GM10248 (cell line): ENCODE measurements at regions of chr3 and their contacts with region 1.

Region 1: DNA sequence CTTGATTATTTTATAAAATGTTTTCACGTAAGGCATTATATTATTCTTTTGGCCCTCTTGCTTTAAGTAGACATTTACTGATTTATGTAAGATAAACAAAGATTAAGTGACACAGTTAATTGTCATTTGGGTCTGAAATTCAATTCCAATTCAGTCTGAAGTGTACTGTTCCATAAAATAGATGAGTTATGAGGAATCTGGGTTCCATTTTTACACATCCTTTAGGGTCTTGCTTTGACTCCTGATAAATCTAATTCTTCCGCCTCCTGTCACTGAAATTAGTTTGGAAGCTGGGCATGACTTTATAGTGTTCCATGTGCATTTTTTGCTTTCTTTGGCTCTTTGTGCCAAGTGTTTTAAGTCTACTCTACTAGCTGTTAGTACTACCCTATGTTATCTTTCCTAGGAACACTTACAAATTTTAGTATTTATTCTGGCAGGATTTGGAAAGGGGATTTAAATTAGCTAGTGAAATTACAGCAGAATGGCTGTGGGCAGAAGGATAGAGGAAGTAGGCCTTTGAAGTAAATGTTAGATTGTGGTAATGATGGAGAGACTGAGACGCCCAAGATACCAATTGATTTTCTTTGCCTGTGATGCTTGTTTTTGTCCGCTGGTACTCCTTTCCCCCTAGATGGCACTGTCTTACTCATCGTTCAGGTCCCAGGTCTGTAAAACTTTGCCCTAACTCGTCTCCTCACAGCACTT is 14.3 kb downstream of the ARL8B start:
- DNase-seq: peak; percentile 63
- CTCF ChIP-seq: peak; percentile 57

Region 2: GRCh38 chr3:4588466-4588865 is 547.9 kb before region 1 on chr3:
- CTCF ChIA-PET with region 1: no interaction called
- POLR2A ChIA-PET with region 1: no interaction called
- DNase-seq: peak; percentile 23
- CTCF ChIP-seq: no peak

Region 3: DNA sequence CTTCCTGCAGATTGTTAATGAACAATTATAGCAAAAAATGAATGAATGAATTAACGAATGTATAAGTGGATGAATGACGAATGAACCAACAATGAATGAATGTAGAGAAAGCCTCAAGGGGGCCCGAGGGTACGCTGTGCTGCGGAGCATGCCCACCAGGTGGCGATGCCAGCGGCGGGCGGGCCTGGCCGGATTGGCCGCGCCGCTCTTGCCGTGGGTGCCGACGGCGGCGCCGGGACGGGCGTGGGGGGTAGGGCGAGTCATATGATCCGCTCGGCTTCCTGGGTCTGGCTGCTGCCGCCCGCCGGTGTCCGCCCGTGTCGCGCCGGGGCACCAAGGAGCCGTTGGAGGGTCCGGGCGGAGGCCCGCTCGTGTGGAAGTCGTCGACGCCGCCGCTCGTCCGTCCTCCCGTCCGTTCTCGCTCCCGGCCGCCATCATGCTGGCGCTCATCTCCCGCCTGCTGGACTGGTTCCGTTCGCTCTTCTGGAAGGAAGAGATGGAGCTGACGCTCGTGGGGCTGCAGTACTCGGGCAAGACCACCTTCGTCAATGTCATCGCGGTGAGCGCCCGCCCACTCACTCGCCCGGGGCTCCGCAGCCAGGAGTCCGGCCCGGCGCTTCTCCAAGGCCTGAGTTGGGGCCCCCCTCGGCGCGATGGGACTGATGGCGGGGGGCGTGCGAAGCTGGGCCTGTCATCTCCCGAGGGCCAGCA is 14.2 kb before region 1 on chr3 and contains the start of gene ARL8B:
- CTCF ChIA-PET with region 1: interaction called, 81 read pairs
- POLR2A ChIA-PET with region 1: interaction called, 6 read pairs
- DNase-seq: peak; percentile 95
- CTCF ChIP-seq: peak; percentile 98

Region 4: DNA sequence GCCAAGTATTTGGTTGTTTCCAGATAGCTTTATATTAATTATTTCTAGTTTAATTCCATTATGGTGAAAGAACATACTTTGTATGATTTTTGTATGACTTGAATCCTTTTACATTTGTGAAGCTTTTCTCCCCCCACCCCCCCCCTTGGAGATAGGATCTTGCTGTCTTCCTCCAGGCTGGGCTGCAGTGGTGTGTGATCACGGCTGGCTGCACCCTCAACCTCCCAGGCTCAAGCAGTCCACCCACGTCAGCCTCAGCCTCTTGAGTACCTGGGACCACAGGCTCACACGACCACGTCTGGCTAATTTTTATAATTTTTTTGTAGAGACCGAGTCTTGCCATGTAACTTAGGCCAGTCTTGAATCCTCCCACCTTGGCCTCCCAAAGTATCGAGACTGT is 15.2 kb after region 1 on chr3:
- CTCF ChIA-PET with region 1: interaction called, 18 read pairs
- POLR2A ChIA-PET with region 1: no interaction called
- DNase-seq: no peak
- CTCF ChIP-seq: no peak

Region 5: DNA sequence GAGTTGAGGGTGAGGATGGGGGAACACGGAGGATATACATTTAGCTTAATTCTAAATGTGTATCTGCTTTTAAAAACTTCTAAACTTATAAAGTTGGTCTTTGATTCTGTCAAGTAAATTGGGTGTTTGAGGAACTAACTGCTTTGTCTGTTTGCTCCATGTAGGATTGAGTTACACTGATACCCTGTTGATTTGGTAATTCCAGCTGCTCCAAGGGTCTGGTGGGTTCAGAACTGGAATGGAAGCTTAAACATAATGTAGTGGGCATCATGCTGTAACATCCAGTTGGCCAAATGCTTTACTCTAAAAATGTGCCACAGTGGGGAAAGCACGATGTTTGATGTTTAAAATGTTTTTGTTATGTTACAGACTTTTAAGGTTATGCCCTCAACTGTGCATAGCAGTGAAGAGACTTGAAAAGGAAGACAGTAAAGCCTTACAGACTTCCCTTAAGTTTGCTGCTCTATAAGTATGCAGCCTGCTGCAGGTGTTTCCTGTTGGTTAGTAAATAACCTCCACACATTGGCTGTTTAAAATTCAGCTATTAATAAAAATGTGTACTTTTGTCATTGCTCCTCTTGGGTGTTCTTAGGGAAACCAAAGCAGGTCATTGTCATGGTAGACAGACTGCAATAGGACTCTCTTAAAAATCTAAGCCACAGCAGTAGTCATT is 45.2 kb after region 1 on chr3:
- CTCF ChIA-PET with region 1: interaction called, 30 read pairs
- POLR2A ChIA-PET with region 1: no interaction called
- DNase-seq: peak; percentile 40
- CTCF ChIP-seq: no peak

Region 6: DNA sequence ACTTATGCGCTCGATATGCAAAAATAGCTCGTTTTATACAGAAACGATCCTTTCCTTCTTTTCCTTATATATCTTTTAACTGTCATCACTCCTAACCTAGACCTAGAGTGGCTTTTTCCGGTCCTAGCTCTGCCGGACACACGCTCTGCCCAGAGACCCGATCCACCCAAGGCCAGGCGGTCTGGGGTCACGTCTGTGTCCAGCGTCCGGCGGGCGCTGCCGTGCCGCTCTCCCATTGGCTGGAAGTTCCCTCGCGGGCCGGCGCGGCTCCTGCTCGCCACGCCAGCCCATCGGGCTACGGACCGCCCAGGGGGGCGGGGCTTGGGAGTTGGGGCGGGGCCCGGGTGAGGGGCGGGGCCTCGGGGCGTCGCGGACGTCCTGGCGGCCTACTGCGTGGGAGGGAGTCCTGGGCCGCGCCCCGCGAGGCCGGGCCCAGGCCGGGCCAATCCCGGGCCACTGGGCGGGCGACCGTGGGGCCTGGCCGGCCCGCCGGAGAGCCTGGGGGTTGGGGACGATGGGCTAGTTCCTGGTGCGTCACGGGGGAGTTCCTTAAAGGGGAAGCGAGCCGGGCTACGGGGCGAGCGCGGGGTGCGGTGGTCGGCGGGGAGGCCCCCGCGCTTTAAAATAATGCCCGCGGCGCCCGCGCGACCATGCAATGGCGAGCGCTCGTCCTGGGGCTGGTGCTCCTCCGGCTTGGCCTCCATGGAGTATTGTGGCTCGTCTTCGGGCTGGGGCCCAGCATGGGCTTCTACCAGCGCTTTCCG is 51.0 kb after region 1 on chr3 and contains the start of gene EDEM1:
- CTCF ChIA-PET with region 1: interaction called, 30 read pairs
- POLR2A ChIA-PET with region 1: no interaction called
- DNase-seq: peak; percentile 98
- CTCF ChIP-seq: no peak

Region 7: GRCh38 chr3:5194341-5195159 is 58.2 kb after region 1 on chr3:
- CTCF ChIA-PET with region 1: interaction called, 14 read pairs
- POLR2A ChIA-PET with region 1: no interaction called
- DNase-seq: no peak
- CTCF ChIP-seq: no peak

Region 8: GRCh38 chr3:5205165-5205941 is 69.0 kb after region 1 on chr3:
- CTCF ChIA-PET with region 1: interaction called, 11 read pairs
- POLR2A ChIA-PET with region 1: no interaction called
- DNase-seq: peak; percentile 65
- CTCF ChIP-seq: no peak

Region 9: GRCh38 chr3:5767304-5767703 is 630.9 kb after region 1 on chr3:
- CTCF ChIA-PET with region 1: no interaction called
- POLR2A ChIA-PET with region 1: no interaction called
- DNase-seq: no peak
- CTCF ChIP-seq: no peak